Right ventricle myocardium superior (tissue), 1 donor: ENCODE measurements at regions of chr18 and their contacts with region 1.

Region 1: DNA sequence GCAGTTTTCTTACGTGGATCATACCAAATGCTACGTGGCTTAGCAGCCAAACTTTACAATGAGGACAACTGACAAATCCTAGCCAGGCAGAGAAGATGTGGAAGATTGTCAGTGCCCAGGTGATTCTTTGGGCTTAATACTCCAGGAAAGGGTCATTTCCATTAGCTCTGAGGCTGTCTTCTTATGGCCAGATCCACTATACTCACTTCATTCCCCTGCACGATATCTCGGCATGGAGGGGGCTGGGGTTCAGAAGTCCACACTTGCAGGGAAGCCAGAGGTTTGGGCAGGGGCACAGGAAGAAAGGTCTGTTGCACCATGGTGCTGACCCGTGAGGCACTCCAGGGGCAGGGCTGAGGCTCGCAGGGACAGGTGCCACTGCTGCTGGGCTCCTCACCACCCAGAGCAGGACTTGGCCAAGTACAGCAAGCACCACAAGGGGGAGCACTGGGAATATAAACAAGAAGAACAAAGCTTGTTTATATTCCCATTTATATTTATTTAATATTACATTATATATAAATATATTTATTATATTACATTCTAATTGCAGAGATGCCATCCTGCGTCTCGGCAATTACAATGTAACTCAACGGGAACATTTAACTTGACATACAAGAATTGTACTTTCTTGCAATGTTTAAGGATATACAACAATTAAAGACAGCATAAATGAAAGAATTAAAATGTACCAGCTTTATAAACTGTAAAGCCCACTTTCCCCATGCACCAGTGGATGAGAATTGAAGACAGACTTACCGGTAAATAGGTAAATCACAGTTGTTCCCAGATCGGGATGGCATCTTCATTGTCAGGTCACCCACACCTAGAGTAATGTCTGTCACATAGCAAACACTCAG is 27.2 kb downstream of the CLUL1 start:
- DNase-seq: peak; percentile 66
- ATAC-seq: peak; percentile 55

Region 2: GRCh38 chr18:374721-375168 is 249.2 kb before region 1 on chr18:
- intact Hi-C with region 1: no loop called
- DNase-seq: no peak
- ATAC-seq: peak; percentile 36

Region 3: DNA sequence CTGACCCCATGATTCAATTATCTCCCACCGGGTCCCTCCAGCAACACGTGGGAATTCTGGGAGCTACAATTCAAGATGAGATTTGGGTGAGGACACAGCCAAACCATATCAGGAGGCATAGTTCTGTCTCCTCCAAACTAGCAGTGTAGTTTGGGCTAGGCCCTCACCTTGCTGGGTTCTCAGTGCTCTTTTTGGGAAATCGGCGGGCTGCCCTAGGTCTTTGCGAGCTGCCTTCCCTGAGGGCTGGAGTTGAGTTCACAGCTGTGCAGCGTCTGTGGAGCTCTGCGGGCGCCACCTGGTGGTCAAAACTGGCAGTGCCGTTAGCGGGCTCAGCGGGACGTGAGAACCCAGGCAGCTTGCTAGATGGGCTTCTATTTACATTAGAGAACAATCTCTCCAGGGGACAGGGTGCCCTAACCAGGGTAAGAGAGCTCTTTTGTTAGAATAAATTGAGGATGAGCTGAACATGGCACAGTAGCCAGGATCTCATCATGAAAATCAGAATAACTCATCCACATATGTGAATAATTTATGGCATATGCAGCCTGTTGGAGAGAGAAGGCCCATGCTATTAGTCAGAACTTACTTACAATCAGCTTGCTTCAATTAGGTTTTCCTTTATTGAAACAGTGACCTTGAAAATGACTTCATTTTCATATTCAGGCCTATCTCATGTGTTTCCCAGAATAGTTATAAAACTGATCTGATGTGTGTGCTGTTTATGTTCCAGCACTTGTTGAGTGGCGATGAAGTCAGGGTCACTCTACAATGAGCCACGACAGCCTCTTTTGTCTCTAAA is 215.4 kb after region 1 on chr18:
- intact Hi-C with region 1: loop called (anchors 5 kb)
- DNase-seq: peak; percentile 93
- ATAC-seq: peak; percentile 97